ENCODE measurements at regions of chr16 and their contacts with region 1.

Region 1: DNA sequence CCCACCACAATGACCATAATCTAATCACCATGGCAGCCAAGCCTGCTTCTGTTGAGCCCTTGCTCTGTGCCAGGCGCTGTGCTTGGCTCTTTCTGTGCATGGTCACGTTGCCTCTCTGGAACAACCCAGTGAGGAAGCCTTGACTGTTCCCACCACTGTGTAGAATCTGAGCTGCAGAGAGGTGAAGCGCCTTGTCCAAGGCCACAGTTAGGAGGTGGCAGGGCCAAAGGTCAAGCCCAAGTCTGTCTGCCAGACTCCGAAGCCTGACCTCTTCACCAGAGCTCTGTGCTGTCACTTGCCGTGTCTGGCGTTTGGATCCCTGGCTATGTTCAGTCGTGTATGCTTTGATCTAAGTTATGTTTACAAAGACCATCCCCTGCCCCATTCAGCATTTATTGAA is 10.5 kb downstream of the CLEC16A start:
- DNase-seq: no peak
- CTCF ChIP-seq: no peak

Region 2: DNA sequence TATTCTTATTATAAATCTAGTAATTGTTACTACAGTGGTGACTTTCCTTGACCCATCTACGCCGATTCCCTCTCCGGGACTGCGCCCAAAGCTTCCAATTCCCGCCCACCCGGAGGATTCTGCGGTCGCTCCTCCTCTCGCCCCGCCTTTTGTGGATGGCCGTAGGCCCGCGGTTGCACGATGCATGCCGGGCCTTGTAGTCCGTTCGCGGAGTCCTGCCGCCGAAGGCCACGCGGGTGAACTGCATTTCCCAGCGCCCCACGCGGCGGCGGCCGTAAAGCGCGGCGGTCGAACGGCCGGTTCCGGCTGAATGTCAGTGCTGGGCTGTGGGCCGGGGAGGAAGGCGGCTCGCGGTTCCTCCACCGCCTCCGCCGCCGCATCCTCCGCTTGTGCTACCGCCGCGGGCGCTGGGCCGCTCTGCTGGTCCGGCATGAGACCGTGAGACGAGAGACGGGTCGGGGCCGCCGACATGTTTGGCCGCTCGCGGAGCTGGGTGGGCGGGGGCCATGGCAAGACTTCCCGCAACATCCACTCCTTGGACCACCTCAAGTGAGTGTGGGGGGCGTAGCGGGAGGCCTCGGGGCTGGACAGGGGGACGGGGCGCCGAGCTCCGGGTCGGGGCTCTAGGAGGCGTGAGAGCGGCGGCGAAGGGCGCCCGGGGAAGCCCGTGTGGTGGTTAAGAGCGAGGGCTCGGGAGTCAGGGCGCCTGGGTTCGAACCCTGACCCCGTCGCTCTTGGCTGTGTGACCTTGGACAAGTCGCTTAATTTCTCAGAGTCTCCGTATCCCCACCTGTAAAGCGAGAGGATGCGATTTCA is 10.4 kb before region 1 on chr16 and contains the start of gene CLEC16A:
- CTCF ChIA-PET with region 1: interaction called, 305 read pairs
- POLR2A ChIA-PET with region 1: no interaction called
- DNase-seq: peak; percentile 92
- CTCF ChIP-seq: no peak

Region 3: DNA sequence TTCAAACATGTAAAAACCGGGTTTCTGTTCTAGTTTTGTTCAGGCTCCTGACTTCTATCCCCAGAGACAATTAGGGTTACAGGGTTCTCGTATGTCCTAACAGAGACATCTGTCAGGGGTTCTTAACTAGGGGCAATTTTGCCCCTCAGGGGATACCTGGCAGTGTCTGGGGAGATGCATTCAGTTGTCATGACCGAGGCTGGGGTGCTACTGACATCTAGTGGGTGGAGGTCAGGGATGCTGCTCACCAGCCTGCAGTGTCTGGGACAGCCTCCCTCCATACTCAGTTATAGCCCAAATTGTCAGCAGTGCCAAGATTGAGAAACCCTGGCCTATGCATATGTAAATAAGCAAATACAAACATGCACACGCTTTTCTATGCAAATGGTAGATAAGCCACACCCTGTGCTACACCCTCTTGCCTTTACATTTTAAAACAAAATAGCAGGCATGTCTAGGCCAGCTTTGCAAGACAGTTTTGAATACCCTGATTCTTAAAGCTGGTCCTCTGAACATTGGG is 26.9 kb after region 1 on chr16:
- CTCF ChIA-PET with region 1: interaction called, 17 read pairs
- POLR2A ChIA-PET with region 1: no interaction called
- DNase-seq: peak; percentile 71
- CTCF ChIP-seq: peak; percentile 76

Region 4: GRCh38 chr16:11361701-11362451 is 407.0 kb after region 1 on chr16:
- CTCF ChIA-PET with region 1: interaction called, 13 read pairs
- POLR2A ChIA-PET with region 1: no interaction called
- DNase-seq: peak; percentile 43
- CTCF ChIP-seq: no peak

Region 5: DNA sequence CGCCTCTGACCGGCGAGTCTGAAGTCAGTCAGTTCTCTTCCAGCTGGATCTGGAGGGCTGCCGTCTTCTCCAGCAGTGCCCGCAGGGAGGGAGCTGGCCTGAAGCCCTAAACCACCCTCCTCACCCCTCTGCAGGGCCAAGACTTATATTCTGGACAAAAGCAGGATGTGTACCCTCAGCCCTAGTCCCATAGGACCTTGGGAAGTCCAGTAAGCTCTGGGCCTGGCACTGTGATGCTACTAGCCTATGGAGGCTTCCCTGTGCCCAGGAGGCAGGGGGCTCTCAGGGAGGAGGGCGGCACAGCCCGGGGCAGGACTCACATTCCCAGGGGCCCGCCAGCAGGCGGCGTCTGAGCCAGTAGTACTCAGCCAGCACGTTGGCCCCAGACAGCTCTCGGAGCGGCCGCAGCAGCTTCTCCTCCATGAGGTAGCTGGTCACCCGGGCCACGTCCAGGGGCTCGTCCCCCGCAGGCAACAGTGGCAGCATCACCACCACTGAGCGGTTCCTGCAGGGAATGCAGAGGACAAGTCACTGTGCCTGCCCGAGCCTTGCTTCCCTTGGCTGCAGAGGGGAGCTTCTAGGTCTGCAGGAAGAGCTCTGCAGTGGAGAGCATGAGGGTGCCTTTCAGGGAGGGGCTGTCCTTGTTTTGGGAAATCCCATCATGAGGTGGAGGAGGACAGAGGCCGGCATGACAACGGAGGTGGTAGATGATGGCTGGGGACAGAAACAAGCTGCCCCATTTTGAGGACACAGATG is 432.1 kb after region 1 on chr16:
- CTCF ChIA-PET with region 1: interaction called, 11 read pairs
- POLR2A ChIA-PET with region 1: no interaction called
- DNase-seq: no peak
- CTCF ChIP-seq: peak; percentile 25

Measured in GM10248 (cell line).